ENCODE measurements at regions of chr13 and their contacts with region 1.

Region 1: DNA sequence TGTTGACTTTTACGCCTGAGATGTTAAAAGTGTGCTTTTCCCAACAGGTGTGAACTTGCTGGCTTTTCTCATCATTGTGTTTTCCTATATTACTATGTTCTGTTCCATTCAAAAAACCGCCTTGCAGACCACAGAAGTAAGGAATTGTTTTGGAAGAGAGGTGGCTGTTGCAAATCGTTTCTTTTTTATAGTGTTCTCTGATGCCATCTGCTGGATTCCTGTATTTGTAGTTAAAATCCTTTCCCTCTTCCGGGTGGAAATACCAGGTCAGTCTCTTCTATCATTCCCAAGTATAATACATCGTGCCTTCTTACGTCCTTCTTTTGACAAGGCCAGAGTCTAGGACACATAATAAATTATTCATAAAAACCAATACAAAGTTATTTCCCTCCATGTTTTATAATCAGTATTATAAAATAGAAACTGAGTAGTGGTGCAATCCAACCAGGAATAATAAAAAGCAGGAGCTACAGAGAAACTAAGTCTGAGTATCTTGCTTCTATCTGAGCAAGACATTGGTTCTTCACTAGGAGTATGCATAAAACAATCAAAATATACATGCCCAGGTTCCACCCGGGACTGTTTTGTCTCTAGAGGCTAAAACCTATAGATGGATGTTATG is 57.9 kb downstream of the RXFP2 start:
- DNase-seq: no peak
- H3K4me3 Mint-ChIP-seq: no peak overlapping the region
- H3K27ac Mint-ChIP-seq: no peak overlapping the region
- H3K4me1 Mint-ChIP-seq: peaks cover 6% of the 10 kb centered on the region
- H3K27me3 Mint-ChIP-seq: no peaks in the 10 kb centered on the region

Region 2: DNA sequence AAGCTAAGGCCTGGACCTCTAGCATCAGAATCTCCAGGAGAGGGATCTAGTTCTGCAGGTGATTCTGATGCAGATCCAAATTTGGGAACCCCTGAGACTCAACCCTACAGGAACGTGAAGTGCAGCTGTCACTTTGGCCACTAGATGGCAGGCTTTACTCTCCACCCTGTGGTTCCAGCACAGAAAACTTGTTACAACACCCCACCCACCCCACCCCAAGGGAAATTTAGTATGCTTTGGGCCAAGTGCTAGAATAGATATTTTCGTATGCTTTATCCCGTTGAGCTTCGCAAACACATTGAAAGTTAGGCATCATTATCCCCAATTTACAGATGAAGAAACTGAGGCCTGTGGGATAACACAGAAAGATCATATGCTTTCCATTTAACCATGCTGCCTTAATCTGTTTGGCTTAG is 365.5 kb before region 1 on chr13:
- CTCF ChIA-PET with region 1: no interaction called
- POLR2A ChIA-PET with region 1: no interaction called
- intact Hi-C with region 1: loop called (anchors 5 kb)
- DNase-seq: peak; percentile 64
- H3K4me3 Mint-ChIP-seq: no peak overlapping the region
- H3K27ac Mint-ChIP-seq: no peak overlapping the region
- H3K4me1 Mint-ChIP-seq: no peaks in the 10 kb centered on the region
- H3K27me3 Mint-ChIP-seq: peaks cover 2% of the 10 kb centered on the region

Region 3: GRCh38 chr13:31775686-31776085 is 21.6 kb before region 1 on chr13:
- CTCF ChIA-PET with region 1: no interaction called
- POLR2A ChIA-PET with region 1: no interaction called
- intact Hi-C with region 1: no loop called
- DNase-seq: no peak
- H3K4me3 Mint-ChIP-seq: no peak overlapping the region
- H3K27ac Mint-ChIP-seq: no peak overlapping the region
- H3K4me1 Mint-ChIP-seq: peaks cover 13% of the 10 kb centered on the region
- H3K27me3 Mint-ChIP-seq: peaks cover 3% of the 10 kb centered on the region